Activated T-helper 2 cell treated with anti-CD3 and anti-CD28 coated beads, Interferon-gamma antibody, Interleukin-2, Interleukin-4, amounts not matched to agents 10 μg/mL and 5 μg/mL and 100 μg/mL, durations not matched to agents 14 hours and 24 hours and 36 hours (primary cell): ENCODE measurements at regions of chr19 and their contacts with region 1.

Region 1: GRCh38 chr19:33795370-33796163 is 1.1 kb upstream of the KCTD15 start:
- DNase-seq: peak; percentile 45
- H3K4me3 Mint-ChIP-seq: peak overlapping the region; percentile 77
- H3K27ac Mint-ChIP-seq: peak overlapping the region; percentile 70
- H3K4me1 Mint-ChIP-seq: no peaks in the 10 kb centered on the region
- H3K27me3 Mint-ChIP-seq: peaks cover 20% of the 10 kb centered on the region

Region 2: GRCh38 chr19:33819880-33820781 is 24.6 kb after region 1 on chr19:
- intact Hi-C with region 1: loop called (anchors 1 kb)
- DNase-seq: peak; percentile 70
- H3K4me3 Mint-ChIP-seq: peak overlapping the region; percentile 81
- H3K27ac Mint-ChIP-seq: peak overlapping the region; percentile 78
- H3K4me1 Mint-ChIP-seq: peaks cover 30% of the 10 kb centered on the region
- H3K27me3 Mint-ChIP-seq: no peaks in the 10 kb centered on the region